Posterior cingulate gyrus (tissue), 11 donors: ENCODE measurements at regions of chr1 and their contacts with region 1.

Region 1: DNA sequence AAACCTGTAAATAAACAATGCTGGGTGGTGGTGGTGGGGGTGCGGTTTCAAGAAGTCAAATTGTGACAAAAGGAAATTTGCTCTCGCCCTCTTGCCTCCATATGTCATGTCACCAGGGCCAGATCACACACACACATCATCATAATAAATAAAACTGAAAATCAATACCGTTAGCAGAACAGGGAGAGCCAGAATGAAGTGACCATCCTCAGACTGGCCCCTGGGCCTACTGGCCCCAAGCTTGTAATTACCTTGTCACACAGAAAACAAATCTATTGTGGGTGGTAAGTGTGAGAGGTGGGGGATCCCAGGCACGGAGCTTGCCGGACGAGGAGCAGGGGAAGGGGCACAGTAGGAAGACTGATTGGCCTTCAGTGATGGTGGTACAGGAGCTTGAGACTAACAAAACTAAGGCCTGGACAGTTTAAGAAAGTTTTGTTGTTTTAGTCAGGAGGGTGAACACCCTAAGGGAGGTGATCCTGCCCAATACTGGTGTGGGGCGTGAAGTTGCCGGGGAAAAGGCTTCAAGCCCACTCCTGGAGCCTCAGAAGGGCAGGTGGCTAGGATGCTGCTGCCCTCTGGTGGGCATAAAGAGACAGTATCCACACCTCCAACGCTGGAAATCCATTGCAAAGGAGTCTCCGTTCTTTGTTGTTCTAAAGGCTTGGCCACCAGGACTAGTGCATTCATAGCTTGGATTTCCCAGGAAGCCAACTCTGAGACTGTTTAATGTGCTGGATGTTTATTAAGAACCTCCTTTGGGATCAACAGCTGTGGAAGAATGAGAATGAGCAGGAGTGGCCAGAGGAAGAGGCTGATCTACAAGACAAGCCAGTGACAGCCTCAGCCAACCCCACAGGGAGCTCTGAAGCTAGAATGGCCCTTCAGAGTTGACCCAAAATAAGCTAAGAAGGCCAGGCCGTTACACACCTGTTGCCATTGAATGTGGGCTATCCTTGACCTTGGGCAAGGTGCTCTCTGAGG is 8.1 kb upstream of the C1orf216 start:
- DNase-seq: peak in 8 of 10 donors; percentile 49 to 93 (median 69)

Region 2: GRCh38 chr1:35769759-35770446 is 43.2 kb after region 1 on chr1 and contains the start of gene CLSPN:
- intact Hi-C with region 1: loop called (anchors 5 kb)
- DNase-seq: peak; percentile 88 to 99 (median 94)